ENCODE measurements at regions of chr1 and their contacts with region 1.

Region 1: GRCh38 chr1:52056163-52056936 is at the start of gene BTF3L4:
- DNase-seq: peak; percentile 94 to 97
- ATAC-seq: peak; percentile 96 to 97 (median 97)
- H3K4me3 ChIP-seq: peak within 1 kb of the TSS; percentile 100
- H3K27ac ChIP-seq: peak within 1 kb of the TSS; percentile 93
- H3K4me1 ChIP-seq: peaks cover 38% of the 10 kb centered on the region
- H3K27me3 ChIP-seq: no peaks in the 10 kb centered on the region
- CTCF ChIP-seq: no peak
- total RNA-seq, gene BTF3L4: 34.2 to 70.1 (median 55.5) TPM

Region 2: DNA sequence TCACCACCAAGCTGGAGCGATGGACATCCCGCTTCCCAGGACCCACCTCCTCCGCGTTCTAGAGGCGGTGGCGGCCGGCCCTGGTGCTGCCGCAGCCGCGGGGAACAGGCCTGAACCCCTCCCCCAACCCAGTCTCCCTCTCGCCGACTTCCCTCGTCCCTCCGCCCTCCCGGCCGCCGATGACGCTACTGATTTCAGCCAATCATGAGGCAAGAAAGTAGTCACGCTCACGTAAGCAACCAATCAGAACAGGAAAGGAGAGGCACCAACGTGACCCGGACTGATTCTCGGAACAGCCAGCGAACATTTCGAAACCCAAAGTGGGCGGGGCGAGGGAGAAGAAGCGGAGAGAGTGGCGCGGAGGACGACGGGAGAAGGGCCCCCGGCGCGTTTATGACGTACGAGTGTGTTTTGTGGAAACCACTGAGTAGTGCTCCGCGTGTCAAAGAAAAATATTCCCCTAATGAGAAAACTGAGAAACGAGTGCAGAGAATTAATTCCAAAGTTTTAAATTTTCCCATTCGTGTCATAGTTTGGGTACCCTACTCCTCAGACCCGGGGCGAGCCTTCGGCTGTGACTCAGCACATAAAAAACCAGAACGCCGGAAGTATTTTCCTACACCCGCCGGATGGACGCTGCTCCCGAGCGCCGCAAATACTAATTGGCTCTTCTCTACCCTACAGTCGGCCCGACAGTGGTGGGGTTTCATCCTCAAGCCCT is 177.6 kb before region 1 on chr1 and contains the start of gene NRDC:
- intact Hi-C with region 1: loop called in 1 of 2 experiments (anchors 5 kb)
- DNase-seq: peak; percentile 100
- ATAC-seq: peak; percentile 94 to 97 (median 95)
- H3K4me3 ChIP-seq: peak within 1 kb of the TSS; percentile 77
- H3K27ac ChIP-seq: peak within 1 kb of the TSS; percentile 96
- H3K4me1 ChIP-seq: peaks cover 26% of the 10 kb centered on the region
- H3K27me3 ChIP-seq: peaks cover 0 to 14% (median 0%) of the 10 kb centered on the region in 3 donors
- CTCF ChIP-seq: no peak
- total RNA-seq, gene NRDC: 232 to 385 (median 288) TPM

Region 3: DNA sequence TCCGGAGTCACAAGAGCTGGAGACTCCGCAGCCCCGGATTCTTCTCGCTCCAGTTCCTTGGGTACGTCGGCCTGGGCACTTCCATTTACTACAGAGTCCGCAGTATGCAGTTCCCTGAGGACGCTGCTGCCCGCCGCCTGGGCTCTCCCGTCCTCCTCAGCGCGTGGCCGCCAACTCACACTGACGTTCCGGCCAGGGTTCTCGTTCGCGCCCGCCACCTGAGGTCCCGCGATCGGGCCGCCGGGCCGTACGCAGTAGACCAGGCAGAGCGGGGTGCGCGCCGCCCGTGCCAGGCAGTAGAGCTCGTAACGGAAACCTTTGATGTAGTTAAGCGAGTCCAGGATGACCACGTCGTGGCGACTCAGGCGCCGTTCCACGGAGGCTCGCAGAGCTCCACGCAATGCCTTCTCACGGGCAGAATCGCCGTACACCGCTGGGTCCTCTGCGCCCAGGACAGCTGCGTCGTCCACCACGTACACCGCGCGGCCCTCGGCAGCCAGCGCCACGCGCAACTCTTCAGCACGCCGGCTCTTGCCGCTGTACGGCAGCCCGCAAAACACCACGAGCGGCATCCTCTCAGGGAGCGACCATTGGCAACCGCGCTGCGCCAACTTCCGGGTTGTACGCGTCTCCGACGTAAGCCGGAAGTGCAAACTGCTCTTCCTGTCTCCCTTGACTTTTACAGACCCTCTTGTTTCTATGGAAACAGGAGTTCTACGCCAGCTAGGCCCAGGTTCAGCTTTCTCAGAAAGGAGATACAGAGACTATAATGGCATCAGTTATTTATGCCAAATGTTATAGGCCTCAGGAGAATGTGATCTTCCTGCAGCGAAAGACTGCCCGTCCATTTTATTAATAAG is 22.9 kb before region 1 on chr1 and contains the start of gene KTI12:
- intact Hi-C with region 1: loop called in 1 of 2 experiments (anchors 2 kb)
- DNase-seq: peak; percentile 89 to 94
- ATAC-seq: peak; percentile 89 to 95 (median 92)
- H3K4me3 ChIP-seq: peak within 1 kb of the TSS; percentile 92
- H3K27ac ChIP-seq: peak within 1 kb of the TSS; percentile 93
- H3K4me1 ChIP-seq: peaks cover 19% of the 10 kb centered on the region
- H3K27me3 ChIP-seq: no peaks in the 10 kb centered on the region
- CTCF ChIP-seq: no peak
- total RNA-seq, gene KTI12: 2.3 to 5.3 (median 4.4) TPM

Measured in psoas muscle (tissue), 8 donors.